CD8-positive, alpha-beta T cell (primary cell): ENCODE measurements at regions of chr3 and their contacts with region 1.

Region 1: DNA sequence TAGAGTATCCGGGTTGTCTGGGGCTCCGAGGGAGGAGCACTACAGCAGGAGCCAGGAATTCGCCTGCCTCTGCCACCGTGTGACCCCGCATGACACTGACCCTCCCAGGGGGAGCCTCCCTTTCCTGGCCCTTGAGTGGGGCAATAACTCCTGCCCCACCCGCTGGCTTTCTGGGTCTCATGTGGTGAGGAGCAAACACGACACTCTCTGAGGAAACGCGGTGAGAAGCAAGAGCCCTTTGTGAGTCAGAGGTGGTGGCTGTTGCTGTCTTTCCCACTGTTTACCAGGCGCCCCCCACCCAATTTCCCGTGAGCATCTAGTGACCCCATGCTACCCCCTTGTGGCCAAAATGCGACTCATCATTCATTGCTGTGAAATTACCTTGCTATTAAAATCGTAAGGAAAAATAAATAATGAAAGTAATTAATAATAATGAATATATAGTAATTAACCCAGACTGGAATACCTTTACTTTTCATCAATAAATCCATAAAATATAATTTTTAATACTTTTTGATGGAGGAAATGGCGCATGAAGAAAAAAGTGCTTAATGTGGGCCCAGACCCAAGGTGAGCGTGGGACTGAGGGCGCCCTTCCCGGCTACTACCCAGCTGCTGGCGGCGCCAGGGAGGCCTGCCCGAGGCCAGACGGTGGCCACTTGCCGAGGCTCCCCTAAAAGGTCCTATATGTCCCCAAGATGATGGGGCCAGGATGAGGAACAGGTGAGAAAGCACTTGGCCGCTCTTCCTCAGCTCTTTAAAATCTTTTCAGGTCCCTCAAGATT is 29.3 kb downstream of the CCNL1 start:
- DNase-seq: peak; percentile 44 to 93 (median 85)
- ATAC-seq: peak; percentile 69
- H3K4me3 ChIP-seq: peak overlapping the region; percentile 14 to 24
- H3K4me3 Mint-ChIP-seq: peak overlapping the region; percentile 72
- H3K27ac ChIP-seq: peak overlapping the region; percentile 71 to 90
- H3K27ac Mint-ChIP-seq: peak overlapping the region; percentile 99
- H3K4me1 ChIP-seq: peaks cover 50% of the 10 kb centered on the region
- H3K4me1 Mint-ChIP-seq: peaks cover 71% of the 10 kb centered on the region
- H3K27me3 ChIP-seq: no peaks in the 10 kb centered on the region
- H3K27me3 Mint-ChIP-seq: no peaks in the 10 kb centered on the region
- CTCF ChIP-seq: peak; percentile 84

Region 2: GRCh38 chr3:156040041-156040440 is 1090.6 kb before region 1 on chr3:
- CTCF ChIA-PET with region 1: no interaction called
- POLR2A ChIA-PET with region 1: no interaction called
- intact Hi-C with region 1: loop called in 1 of 2 experiments (anchors 10 kb)
- DNase-seq: no peak
- ATAC-seq: no peak
- H3K4me3 ChIP-seq: no peak overlapping the region
- H3K4me3 Mint-ChIP-seq: no peak overlapping the region
- H3K27ac ChIP-seq: no peak overlapping the region
- H3K27ac Mint-ChIP-seq: no peak overlapping the region
- H3K4me1 ChIP-seq: no peaks in the 10 kb centered on the region
- H3K4me1 Mint-ChIP-seq: peaks cover 2% of the 10 kb centered on the region
- H3K27me3 ChIP-seq: no peaks in the 10 kb centered on the region
- H3K27me3 Mint-ChIP-seq: peaks cover 5% of the 10 kb centered on the region
- CTCF ChIP-seq: no peak

Region 3: DNA sequence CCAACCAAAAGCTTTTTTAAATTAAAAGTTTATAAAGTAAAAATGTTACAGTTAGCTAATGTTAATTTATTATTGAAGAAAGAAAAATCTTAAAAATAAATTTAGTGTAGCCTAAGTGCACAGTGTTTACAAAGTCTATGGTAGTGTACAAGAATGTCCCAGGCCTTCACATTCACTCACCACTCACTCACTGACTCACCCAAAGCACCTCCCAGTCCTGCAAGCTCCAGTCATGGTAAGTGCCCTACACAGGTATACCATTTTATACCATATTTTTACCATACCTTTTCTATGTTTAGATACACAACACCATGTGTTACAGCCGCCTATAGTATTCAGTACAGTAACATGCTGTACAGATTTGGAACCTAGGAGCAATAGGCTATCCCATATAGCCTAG is 604.9 kb before region 1 on chr3:
- CTCF ChIA-PET with region 1: no interaction called
- POLR2A ChIA-PET with region 1: no interaction called
- intact Hi-C with region 1: loop called (anchors 2 kb)
- DNase-seq: no peak
- ATAC-seq: no peak
- H3K4me3 ChIP-seq: no peak overlapping the region
- H3K4me3 Mint-ChIP-seq: no peak overlapping the region
- H3K27ac ChIP-seq: no peak overlapping the region
- H3K27ac Mint-ChIP-seq: no peak overlapping the region
- H3K4me1 ChIP-seq: peaks cover 6% of the 10 kb centered on the region
- H3K4me1 Mint-ChIP-seq: peaks cover 8% of the 10 kb centered on the region
- H3K27me3 ChIP-seq: no peaks in the 10 kb centered on the region
- H3K27me3 Mint-ChIP-seq: peaks cover 15% of the 10 kb centered on the region
- CTCF ChIP-seq: no peak

Region 4: DNA sequence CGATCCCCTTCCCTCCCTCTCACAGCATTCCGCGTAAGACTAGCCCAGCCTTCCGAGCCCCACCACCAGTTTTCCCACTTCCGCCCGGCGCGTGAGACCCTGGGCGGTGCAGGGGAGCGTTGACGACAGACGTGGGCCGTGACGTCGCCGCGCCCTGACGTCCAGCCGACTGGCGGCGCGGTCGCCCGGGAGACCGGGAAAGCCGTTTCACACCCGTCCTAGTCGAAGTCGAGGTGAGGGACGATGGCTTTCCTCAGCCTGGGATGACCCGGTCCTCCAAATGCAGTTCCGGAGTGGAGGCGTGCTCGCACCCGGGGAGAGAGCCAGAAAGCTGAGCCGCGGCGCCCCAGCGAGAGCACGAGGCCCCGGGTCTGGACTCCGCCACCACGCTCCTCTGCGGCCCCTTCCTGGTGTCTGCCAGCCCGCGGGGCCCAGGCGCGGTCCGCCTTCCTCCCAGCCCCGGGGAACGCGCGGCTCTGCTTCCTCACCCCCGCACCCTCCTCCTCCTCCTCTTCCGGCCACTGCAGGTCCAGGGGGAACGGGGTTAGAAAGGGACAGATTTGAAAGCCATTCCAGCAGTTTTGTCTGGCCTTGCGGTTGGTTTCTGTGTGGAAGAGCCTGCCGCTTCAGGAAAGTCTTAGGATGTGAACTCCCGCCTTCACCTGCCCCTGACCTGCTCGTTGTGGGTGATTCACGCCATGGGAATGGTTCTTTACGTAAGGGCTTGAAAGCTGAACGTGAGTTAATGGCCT is 304.3 kb before region 1 on chr3 and contains the start of gene LEKR1:
- CTCF ChIA-PET with region 1: no interaction called
- POLR2A ChIA-PET with region 1: no interaction called
- intact Hi-C with region 1: loop called in 1 of 2 experiments (anchors 2 kb)
- DNase-seq: peak; percentile 28 to 92 (median 67)
- ATAC-seq: peak; percentile 54
- H3K4me3 ChIP-seq: peak within 1 kb of the TSS; percentile 71 to 81
- H3K4me3 Mint-ChIP-seq: peak within 1 kb of the TSS; percentile 89
- H3K27ac ChIP-seq: peak within 1 kb of the TSS; percentile 73 to 92
- H3K27ac Mint-ChIP-seq: peak within 1 kb of the TSS; percentile 95
- H3K4me1 ChIP-seq: peaks cover 9% of the 10 kb centered on the region
- H3K4me1 Mint-ChIP-seq: peaks cover 13% of the 10 kb centered on the region
- H3K27me3 ChIP-seq: no peaks in the 10 kb centered on the region
- H3K27me3 Mint-ChIP-seq: no peaks in the 10 kb centered on the region
- CTCF ChIP-seq: no peak
- total RNA-seq, gene LEKR1: 1.5 to 1.8 TPM

Region 5: DNA sequence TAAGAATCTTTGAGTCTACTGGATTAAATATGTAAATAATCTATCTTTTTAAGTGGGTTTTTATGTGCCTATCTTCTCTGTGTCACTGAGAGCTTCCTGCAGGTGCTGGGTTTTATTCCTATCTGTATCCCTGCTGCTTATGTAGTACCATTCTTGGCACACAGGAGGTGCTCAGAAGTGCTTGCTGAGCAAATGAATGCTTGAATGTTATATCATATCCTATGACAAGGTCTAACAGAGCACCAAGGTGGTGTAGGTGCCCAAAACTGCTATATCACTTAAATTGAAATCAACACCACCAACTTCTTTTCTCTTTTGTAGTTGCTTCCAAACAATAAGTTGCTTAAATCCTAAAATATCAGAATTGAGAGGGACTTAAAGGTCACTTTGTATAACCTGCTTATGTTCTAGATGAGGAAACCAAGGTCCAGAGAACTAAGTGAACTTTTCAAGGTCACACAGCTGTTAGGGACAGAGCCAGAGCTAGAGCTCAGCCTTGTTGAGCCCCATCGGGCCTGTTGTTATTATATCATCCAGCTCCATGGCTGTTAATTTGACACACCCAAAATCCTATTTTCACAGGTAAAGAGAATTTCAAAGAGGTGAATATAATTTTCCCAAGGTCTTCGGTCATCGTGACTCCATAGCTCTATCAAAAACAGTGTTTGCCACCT is 16.7 kb before region 1 on chr3:
- CTCF ChIA-PET with region 1: interaction called, 13 read pairs
- POLR2A ChIA-PET with region 1: no interaction called
- intact Hi-C with region 1: loop called in 1 of 2 experiments (anchors 2 kb)
- DNase-seq: peak in 2 of 9 experiments; percentile 38 to 52
- ATAC-seq: peak; percentile 90
- H3K4me3 ChIP-seq: no peak overlapping the region
- H3K4me3 Mint-ChIP-seq: no peak overlapping the region
- H3K27ac ChIP-seq: no peak overlapping the region
- H3K27ac Mint-ChIP-seq: no peak overlapping the region
- H3K4me1 ChIP-seq: no peaks in the 10 kb centered on the region
- H3K4me1 Mint-ChIP-seq: no peaks in the 10 kb centered on the region
- H3K27me3 ChIP-seq: no peaks in the 10 kb centered on the region
- H3K27me3 Mint-ChIP-seq: no peaks in the 10 kb centered on the region
- CTCF ChIP-seq: no peak